HEK293T (cell line): ENCODE measurements at regions of chr5 and their contacts with region 1.

Region 1: GRCh38 chr5:170100066-170100943 is 5.4 kb upstream of the FOXI1 start:
- DNase-seq: peak; percentile 78

Region 2: DNA sequence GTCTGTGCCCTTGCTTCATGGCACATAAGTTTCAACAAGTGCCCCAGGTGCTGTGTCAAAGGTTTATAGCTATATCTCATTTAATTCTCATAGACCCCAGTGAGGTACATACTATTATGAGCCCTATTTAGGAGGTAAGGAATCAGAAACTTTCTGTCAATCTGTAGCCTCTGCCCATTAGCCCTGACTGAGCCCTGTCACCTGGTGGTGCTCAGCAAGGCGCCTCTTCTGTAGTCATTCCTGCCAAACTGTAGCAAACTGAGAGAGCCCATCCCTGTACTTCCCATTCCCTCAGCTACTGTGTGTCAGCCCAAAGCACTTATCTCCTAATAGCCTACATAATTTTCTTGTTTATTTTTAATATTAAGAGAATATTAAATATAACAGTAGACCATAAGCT is 41.1 kb before region 1 on chr5:
- CTCF ChIA-PET with region 1: no interaction called
- POLR2A ChIA-PET with region 1: no interaction called
- DNase-seq: no peak

Region 3: GRCh38 chr5:170183816-170184687 is 83.7 kb after region 1 on chr5:
- CTCF ChIA-PET with region 1: interaction called, 14 read pairs
- POLR2A ChIA-PET with region 1: no interaction called
- DNase-seq: peak; percentile 85

Region 4: DNA sequence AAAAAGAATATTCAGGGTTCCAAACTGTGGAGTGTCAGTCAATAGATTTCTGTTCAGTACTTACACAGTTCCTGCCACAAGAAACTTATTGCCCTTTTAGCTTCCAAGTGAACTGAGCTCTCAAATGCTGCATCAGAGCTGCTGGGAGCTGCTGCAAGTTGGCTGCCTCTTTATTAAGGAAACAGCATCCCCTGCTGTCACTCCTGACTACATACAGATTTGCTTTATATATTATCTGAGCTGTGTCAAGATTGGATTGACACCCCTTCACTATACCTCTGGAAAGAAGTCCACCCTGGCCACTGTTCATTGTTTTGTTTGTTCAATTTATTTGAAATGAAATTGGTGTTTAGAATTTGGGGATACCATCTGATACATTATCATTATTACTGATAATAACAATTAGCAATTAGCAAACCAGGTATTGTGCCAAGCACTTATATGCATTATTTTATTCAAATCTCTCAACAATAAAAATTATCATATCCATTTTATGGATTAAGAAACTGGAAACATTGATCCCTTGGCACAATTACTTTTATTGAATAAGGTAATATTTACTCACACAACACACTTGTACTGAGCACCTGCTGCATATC is 116.1 kb after region 1 on chr5:
- CTCF ChIA-PET with region 1: interaction called, 16 read pairs
- POLR2A ChIA-PET with region 1: no interaction called
- DNase-seq: peak; percentile 68